Activated B cell treated with CpG ODN at 0.5 μM for 24 hours (primary cell): ENCODE measurements at regions of chr19 and their contacts with region 1.

Region 1: GRCh38 chr19:56121180-56122167 is at the start of gene ZNF787:
- DNase-seq: peak; percentile 99
- ATAC-seq: peak; percentile 87
- H3K4me3 Mint-ChIP-seq: peak within 1 kb of the TSS; percentile 91
- H3K27ac Mint-ChIP-seq: peak within 1 kb of the TSS; percentile 95
- H3K4me1 Mint-ChIP-seq: peaks cover 45% of the 10 kb centered on the region
- H3K27me3 Mint-ChIP-seq: no peaks in the 10 kb centered on the region
- CTCF ChIP-seq: no peak
- total RNA-seq, gene ZNF787: 40.8 and 42.3 TPM in 2 replicates

Region 2: DNA sequence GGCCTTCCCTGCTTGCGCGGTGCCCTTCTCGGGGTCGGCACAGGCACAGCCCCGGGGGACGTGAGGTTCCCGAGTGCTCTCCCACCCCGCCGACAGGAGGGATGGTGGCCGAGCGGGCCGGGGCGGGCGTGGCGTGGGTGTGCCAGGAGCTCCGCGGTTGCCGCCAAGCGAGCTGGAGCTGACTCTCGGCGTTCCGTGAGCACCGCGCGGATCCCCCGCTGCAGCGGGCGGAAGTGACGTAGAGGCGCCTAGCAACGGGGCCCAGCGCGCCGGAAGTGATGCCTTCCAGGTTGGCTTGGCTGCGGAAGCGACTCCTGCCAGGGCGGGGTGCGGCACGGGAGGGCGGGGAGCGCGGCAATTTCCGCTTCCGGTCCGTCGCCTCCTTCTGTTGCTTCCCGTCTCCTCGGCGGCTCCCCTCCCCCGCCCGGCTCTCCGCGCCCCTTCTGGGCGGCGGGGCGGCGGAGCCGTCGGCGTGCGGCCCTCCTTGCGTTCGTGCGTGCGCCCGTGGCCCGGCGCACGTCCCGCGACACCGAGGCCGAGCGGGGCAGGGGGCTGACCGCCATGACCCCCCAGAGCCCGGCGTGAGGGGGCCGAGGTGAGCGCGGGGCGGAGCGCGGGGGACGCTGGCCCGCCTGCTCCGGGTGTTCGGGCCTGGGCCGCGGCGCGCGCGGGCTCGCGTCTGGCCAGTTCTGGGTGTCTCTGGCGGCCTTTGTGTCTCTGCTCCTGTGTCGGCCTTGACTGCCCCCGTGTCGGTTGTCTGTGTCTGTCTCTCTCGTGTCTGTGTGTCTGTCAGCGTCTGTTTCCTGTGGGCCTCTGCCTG is 446.4 kb before region 1 on chr19 and contains the start of gene EPN1:
- CTCF ChIA-PET with region 1: no interaction called
- POLR2A ChIA-PET with region 1: no interaction called
- intact Hi-C with region 1: loop called (anchors 2 kb)
- DNase-seq: peak; percentile 93
- ATAC-seq: peak; percentile 65
- H3K4me3 Mint-ChIP-seq: peak within 1 kb of the TSS; percentile 89
- H3K27ac Mint-ChIP-seq: peak within 1 kb of the TSS; percentile 83
- H3K4me1 Mint-ChIP-seq: peaks cover 69% of the 10 kb centered on the region
- H3K27me3 Mint-ChIP-seq: no peaks in the 10 kb centered on the region
- CTCF ChIP-seq: no peak
- total RNA-seq, gene EPN1: 56.6 and 65.2 TPM in 2 replicates

Region 3: GRCh38 chr19:56105090-56105701 is 16.3 kb before region 1 on chr19:
- CTCF ChIA-PET with region 1: interaction called, 4 read pairs
- POLR2A ChIA-PET with region 1: interaction called, 51 read pairs
- intact Hi-C with region 1: loop called (anchors 1 kb)
- DNase-seq: peak; percentile 49
- ATAC-seq: peak; percentile 68
- H3K4me3 Mint-ChIP-seq: peak overlapping the region; percentile 63
- H3K27ac Mint-ChIP-seq: peak overlapping the region; percentile 66
- H3K4me1 Mint-ChIP-seq: peaks cover 53% of the 10 kb centered on the region
- H3K27me3 Mint-ChIP-seq: no peaks in the 10 kb centered on the region
- CTCF ChIP-seq: no peak

Region 4: GRCh38 chr19:56133858-56134653 is 12.6 kb after region 1 on chr19:
- CTCF ChIA-PET with region 1: no interaction called
- POLR2A ChIA-PET with region 1: interaction called, 19 read pairs
- intact Hi-C with region 1: loop called (anchors 1 kb)
- DNase-seq: no peak
- ATAC-seq: peak; percentile 100
- H3K4me3 Mint-ChIP-seq: peak overlapping the region; percentile 53
- H3K27ac Mint-ChIP-seq: peak overlapping the region; percentile 76
- H3K4me1 Mint-ChIP-seq: peaks cover 9% of the 10 kb centered on the region
- H3K27me3 Mint-ChIP-seq: no peaks in the 10 kb centered on the region
- CTCF ChIP-seq: no peak

Region 5: DNA sequence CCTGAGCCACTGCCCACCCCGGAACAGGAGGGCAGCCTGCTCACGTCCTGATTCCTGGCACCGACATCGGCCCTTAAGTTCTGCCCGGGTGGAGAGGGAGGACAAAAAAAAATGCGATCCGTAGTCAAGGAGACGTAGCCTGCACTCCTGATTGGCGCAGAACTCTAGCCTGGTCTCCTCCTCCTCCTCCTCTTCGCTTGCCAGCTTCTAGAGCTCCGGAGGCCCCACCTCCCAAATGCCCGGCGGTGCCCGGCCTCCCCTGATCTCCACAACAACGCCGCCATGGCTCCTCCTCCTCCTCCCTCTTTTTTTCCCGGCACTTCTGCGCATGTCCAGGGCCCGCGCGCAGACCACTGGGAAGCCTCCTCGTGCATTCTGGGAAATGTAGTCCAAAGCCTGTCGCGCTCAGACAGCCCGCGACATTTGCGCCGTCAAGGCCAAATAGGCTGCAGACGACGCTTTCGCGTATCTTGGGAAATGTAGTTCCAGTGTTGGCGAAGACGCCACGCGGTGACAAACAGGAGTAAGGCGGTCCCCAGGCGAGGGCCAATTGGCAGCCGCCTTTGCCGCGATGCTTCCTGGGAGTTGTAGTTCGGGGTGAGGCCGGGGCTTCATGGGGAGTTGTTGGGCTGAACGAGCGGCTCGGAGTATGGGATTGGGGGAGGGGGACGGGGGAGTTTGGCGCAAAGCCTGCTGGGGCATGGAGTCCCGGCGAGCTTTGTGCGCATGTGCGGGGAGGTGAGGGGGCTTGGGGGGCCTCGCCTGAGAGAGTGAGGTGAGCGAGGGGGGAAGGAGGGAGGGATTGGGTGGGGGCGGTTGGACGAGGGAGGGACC is 19.3 kb after region 1 on chr19 and contains the start of gene ZNF444:
- CTCF ChIA-PET with region 1: no interaction called
- POLR2A ChIA-PET with region 1: interaction called, 40 read pairs
- intact Hi-C with region 1: loop called (anchors 1 kb)
- DNase-seq: peak; percentile 96
- ATAC-seq: peak; percentile 86
- H3K4me3 Mint-ChIP-seq: peak within 1 kb of the TSS; percentile 98
- H3K27ac Mint-ChIP-seq: peak within 1 kb of the TSS; percentile 99
- H3K4me1 Mint-ChIP-seq: peaks cover 29% of the 10 kb centered on the region
- H3K27me3 Mint-ChIP-seq: no peaks in the 10 kb centered on the region
- CTCF ChIP-seq: no peak
- total RNA-seq, gene ZNF444: 28.1 and 32.1 TPM in 2 replicates

Region 6: DNA sequence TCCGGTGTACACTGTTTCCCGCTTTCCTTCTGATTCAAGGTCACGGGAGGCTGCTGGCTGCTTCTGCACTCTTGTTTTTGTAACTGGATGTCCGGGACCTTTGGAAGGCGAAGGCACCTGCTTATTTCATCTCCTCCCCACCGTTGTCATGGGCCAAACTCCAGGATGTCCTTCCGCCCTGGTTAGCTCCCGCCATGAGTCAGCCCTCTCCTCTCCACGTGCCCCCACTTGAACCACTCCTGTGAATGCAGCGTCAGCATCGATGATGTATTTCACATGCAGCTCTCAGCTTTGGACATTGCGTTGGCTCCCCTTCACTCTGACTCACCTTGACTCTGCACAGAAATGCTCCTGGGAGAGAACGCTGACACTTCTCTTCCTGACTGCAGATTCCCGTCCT is 48.8 kb after region 1 on chr19:
- CTCF ChIA-PET with region 1: interaction called, 4 read pairs
- POLR2A ChIA-PET with region 1: no interaction called
- intact Hi-C with region 1: loop called (anchors 1 kb)
- DNase-seq: no peak
- ATAC-seq: no peak
- H3K4me3 Mint-ChIP-seq: no peak overlapping the region
- H3K27ac Mint-ChIP-seq: no peak overlapping the region
- H3K4me1 Mint-ChIP-seq: peaks cover 2% of the 10 kb centered on the region
- H3K27me3 Mint-ChIP-seq: peaks cover 3% of the 10 kb centered on the region
- CTCF ChIP-seq: no peak